ENCODE measurements at regions of chr20 and their contacts with region 1.

Region 1: DNA sequence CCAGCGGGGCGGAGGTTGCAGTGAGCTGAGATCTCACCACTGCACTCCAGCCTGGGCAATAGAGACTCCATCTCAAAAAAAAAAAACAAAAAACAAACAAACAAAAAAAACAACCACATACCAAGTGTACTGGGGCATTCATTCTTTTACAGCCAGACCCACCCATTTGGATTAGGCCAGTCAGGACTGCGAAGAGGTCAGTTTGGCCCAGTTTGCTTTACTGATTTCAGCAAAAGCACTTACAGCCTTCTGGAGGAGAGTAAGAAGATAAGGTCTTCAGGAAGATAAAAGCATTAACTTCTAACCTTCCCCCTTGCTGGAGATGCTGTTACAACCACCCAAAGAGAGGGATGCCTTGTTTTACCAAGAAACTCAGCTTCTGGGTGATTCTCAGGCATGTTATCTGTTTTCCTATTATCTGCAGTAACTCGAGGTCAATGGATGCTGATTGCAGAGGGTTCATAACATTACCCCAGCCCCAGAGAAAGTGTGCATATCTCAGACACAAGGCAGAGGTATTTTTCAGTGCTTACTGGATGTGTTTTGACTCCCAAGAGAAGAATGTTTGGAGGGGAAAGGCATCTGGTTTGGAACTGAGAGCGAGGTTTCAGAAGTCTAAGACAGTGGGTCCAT is 118.9 kb downstream of the RIN2 start:
- DNase-seq: no peak
- ATAC-seq: no peak
- H3K4me3 ChIP-seq: no peak overlapping the region
- H3K27ac ChIP-seq: peak overlapping the region; percentile 8
- H3K4me1 ChIP-seq: peaks cover 22% of the 10 kb centered on the region
- H3K27me3 ChIP-seq: no peaks in the 10 kb centered on the region
- CTCF ChIP-seq: no peak

Region 2: DNA sequence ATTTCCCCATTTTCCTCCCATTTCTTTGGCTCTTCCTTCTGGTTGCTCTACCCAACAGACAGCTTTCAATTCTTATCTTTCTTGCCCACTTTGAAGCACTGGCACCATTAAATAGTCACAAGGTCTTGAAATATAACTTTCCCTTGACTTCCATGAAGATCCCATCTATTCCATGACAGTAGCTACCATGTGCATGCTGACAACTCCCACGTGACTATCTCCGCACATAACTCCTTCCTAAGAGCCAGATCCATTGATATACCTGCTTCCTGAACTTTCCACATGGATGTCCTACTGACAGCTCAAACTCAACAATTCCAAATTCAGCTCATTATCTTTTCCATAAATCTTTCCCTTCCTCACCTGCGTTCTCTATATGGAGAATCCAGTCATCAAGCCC is 17.5 kb before region 1 on chr20:
- CTCF ChIA-PET with region 1: no interaction called
- POLR2A ChIA-PET with region 1: interaction called, 13 read pairs
- in situ Hi-C with region 1: no loop called
- intact Hi-C with region 1: no loop called
- DNase-seq: no peak
- ATAC-seq: no peak
- H3K4me3 ChIP-seq: no peak overlapping the region
- H3K27ac ChIP-seq: no peak overlapping the region
- H3K4me1 ChIP-seq: peaks cover 8% of the 10 kb centered on the region
- H3K27me3 ChIP-seq: no peaks in the 10 kb centered on the region
- CTCF ChIP-seq: no peak

Region 3: DNA sequence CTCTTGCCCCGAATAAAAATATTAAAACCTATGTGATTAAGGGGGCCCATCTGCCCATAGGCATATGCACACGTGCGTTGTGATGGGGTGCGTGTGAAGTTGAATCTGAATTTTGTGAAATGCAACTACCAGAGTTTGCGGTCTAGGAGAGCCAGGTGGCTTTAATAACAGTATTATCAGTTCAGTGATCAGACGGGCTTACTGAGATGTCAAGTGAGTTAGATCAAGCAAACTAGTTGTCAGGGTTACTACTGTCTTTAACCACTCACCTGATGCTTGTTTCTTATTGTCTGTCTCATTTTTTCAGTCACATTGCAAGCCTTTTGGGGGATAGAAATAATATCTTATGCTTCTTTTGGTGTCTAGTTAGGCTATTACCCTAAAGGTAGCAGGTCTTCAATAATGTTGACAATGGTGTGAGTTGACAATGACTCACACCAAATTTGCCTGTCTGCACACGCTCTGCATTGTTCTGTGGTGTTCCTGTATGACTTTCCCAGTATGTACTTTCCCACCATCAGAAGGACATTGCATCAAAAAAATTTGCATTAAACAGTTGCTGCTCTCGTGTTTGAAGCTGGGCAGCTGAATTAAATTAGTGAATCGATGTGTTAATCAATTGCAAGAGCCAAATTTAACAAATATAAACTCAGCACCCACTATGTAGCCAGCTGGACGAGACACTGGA is 37.1 kb after region 1 on chr20:
- CTCF ChIA-PET with region 1: no interaction called
- POLR2A ChIA-PET with region 1: no interaction called
- in situ Hi-C with region 1: no loop called
- intact Hi-C with region 1: no loop called
- DNase-seq: peak; percentile 74
- ATAC-seq: peak; percentile 89
- H3K4me3 ChIP-seq: no peak overlapping the region
- H3K27ac ChIP-seq: peak overlapping the region; percentile 59; the same call in 1 of the 2 replicates
- H3K4me1 ChIP-seq: peaks cover 17% of the 10 kb centered on the region
- H3K27me3 ChIP-seq: no peaks in the 10 kb centered on the region
- CTCF ChIP-seq: no peak

Measured in Panc1 (cell line).